ENCODE measurements at regions of chr6 and their contacts with region 1.

Region 1: DNA sequence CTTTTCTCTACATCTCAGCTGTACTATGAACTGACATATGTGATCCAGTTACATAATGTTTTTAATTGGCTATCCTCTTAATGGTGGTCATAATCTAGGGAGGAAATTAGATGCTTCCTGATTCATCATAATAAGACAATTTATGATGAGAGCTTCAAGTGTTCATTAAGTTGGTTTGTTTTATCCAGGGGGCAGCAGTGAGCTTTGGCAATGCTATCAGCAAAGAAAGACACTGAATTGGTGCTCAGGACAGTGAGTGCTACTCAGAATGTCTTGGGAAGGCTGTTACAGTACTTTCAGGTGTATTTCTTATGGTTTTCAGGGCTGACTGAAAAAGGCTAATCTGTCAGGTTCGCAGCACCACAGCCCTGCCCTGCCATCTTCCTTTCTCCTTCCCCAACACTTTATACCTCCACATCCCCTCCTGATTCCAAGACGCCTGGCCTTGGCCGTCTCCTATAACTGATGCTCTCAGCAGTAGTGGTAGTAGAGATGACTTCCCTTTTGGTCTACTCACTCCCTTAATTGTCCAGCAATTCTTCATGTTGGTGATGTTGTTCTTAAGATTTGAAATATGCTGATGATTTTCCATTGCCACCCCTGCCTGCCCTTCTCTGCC is 67.0 kb upstream of the TNFAIP3 start:
- DNase-seq: peak; percentile 76 to 82 (median 80)
- H3K4me3 ChIP-seq: no peak overlapping the region
- H3K4me3 Mint-ChIP-seq: peak overlapping the region in 3 of 8 donors; percentile 4 to 30 (median 11)
- H3K27ac ChIP-seq: peak overlapping the region; percentile 36
- H3K27ac Mint-ChIP-seq: peak overlapping the region; percentile 28 to 98 (median 93)
- H3K4me1 ChIP-seq: peaks cover 41% of the 10 kb centered on the region
- H3K4me1 Mint-ChIP-seq: peaks cover 30 to 59% (median 43%) of the 10 kb centered on the region in 4 donors
- H3K27me3 ChIP-seq: no peaks in the 10 kb centered on the region
- H3K27me3 Mint-ChIP-seq: no peaks in the 10 kb centered on the region

Region 2: GRCh38 chr6:137717074-137718073 is 82.7 kb before region 1 on chr6:
- CTCF ChIA-PET with region 1: interaction called, 25 read pairs
- POLR2A ChIA-PET with region 1: interaction called, 25 read pairs
- intact Hi-C with region 1: no loop called
- DNase-seq: peak; percentile 87 to 97 (median 91)
- H3K4me3 ChIP-seq: no peak overlapping the region
- H3K4me3 Mint-ChIP-seq: peak overlapping the region in 7 of 8 donors; percentile 30 to 80 (median 67)
- H3K27ac ChIP-seq: peak overlapping the region; percentile 83
- H3K27ac Mint-ChIP-seq: peak overlapping the region; percentile 93 to 100 (median 99)
- H3K4me1 ChIP-seq: peaks cover 42% of the 10 kb centered on the region
- H3K4me1 Mint-ChIP-seq: peaks cover 37 to 56% (median 46%) of the 10 kb centered on the region in 4 donors
- H3K27me3 ChIP-seq: no peaks in the 10 kb centered on the region
- H3K27me3 Mint-ChIP-seq: no peaks in the 10 kb centered on the region

Region 3: DNA sequence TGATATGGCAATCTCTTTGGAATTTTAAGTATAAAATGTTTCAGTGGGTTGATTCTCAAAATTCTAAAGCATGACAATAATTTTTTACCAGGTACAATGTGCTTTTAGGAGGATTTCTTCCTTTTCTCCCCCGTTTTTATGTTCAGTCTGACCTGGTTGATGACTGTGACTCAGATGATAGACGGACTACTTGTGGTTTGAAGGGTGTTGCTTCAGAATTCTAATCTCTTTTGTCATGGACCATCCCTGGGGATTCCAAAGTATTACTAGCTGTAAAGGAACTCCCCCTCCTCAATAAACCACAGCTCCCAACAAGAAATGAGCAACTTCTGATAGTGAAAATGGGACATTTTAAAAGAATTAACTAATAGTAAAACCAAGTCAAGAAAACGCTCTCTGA is 32.1 kb after region 1 on chr6:
- CTCF ChIA-PET with region 1: interaction called, 13 read pairs
- POLR2A ChIA-PET with region 1: no interaction called
- intact Hi-C with region 1: no loop called
- DNase-seq: no peak
- H3K4me3 ChIP-seq: no peak overlapping the region
- H3K4me3 Mint-ChIP-seq: no peak overlapping the region
- H3K27ac ChIP-seq: no peak overlapping the region
- H3K27ac Mint-ChIP-seq: no peak overlapping the region
- H3K4me1 ChIP-seq: peaks cover 26% of the 10 kb centered on the region
- H3K4me1 Mint-ChIP-seq: peaks cover 10 to 29% (median 20%) of the 10 kb centered on the region in 4 donors
- H3K27me3 ChIP-seq: no peaks in the 10 kb centered on the region
- H3K27me3 Mint-ChIP-seq: no peaks in the 10 kb centered on the region

Region 4: GRCh38 chr6:137938770-137939379 is 138.8 kb after region 1 on chr6:
- CTCF ChIA-PET with region 1: interaction called, 122 read pairs
- POLR2A ChIA-PET with region 1: interaction called, 10 read pairs
- intact Hi-C with region 1: no loop called
- DNase-seq: no peak
- H3K4me3 ChIP-seq: no peak overlapping the region
- H3K4me3 Mint-ChIP-seq: no peak overlapping the region
- H3K27ac ChIP-seq: no peak overlapping the region
- H3K27ac Mint-ChIP-seq: peak overlapping the region in 1 of 7 donors; percentile 8
- H3K4me1 ChIP-seq: no peaks in the 10 kb centered on the region
- H3K4me1 Mint-ChIP-seq: peaks cover 1 to 9% (median 7%) of the 10 kb centered on the region in 4 donors
- H3K27me3 ChIP-seq: no peaks in the 10 kb centered on the region
- H3K27me3 Mint-ChIP-seq: no peaks in the 10 kb centered on the region

Region 5: GRCh38 chr6:138001750-138002349 is 201.8 kb after region 1 on chr6:
- CTCF ChIA-PET with region 1: interaction called, 29 read pairs
- POLR2A ChIA-PET with region 1: no interaction called
- intact Hi-C with region 1: no loop called
- DNase-seq: peak; percentile 53 to 63 (median 55)
- H3K4me3 ChIP-seq: no peak overlapping the region
- H3K4me3 Mint-ChIP-seq: no peak overlapping the region
- H3K27ac ChIP-seq: no peak overlapping the region
- H3K27ac Mint-ChIP-seq: no peak overlapping the region
- H3K4me1 ChIP-seq: no peaks in the 10 kb centered on the region
- H3K4me1 Mint-ChIP-seq: peaks cover 0 to 3% (median 0%) of the 10 kb centered on the region in 4 donors
- H3K27me3 ChIP-seq: no peaks in the 10 kb centered on the region
- H3K27me3 Mint-ChIP-seq: peaks cover 0 to 9% of the 10 kb centered on the region in 2 donors

Measured in CD4-positive, alpha-beta memory T cell (primary cell).